ENCODE measurements at regions of chr6 and their contacts with region 1.

Region 1: GRCh38 chr6:108260809-108261569 is at the start of gene SNX3:
- DNase-seq: peak; percentile 98
- H3K4me3 ChIP-seq: peak within 1 kb of the TSS; percentile 87
- H3K4me3 Mint-ChIP-seq: peak within 1 kb of the TSS; percentile 92
- H3K27ac Mint-ChIP-seq: peak within 1 kb of the TSS; percentile 87
- H3K4me1 ChIP-seq: peaks cover 8% of the 10 kb centered on the region; the same call in 1 of the 2 replicates
- H3K4me1 Mint-ChIP-seq: no peaks in the 10 kb centered on the region
- H3K27me3 ChIP-seq: no peaks in the 10 kb centered on the region
- H3K27me3 Mint-ChIP-seq: no peaks in the 10 kb centered on the region
- CTCF ChIP-seq: no peak
- total RNA-seq, gene SNX3: 111 and 114 TPM in 2 replicates

Region 2: GRCh38 chr6:106751501-106752252 is 1509.3 kb before region 1 on chr6:
- CTCF ChIA-PET with region 1: no interaction called
- POLR2A ChIA-PET with region 1: no interaction called
- intact Hi-C with region 1: no loop called
- DNase-seq: peak in 1 of 2 experiments; percentile 55
- H3K4me3 ChIP-seq: no peak overlapping the region
- H3K4me3 Mint-ChIP-seq: no peak overlapping the region
- H3K27ac Mint-ChIP-seq: peak overlapping the region; percentile 4
- H3K4me1 ChIP-seq: peaks cover 26% of the 10 kb centered on the region
- H3K4me1 Mint-ChIP-seq: peaks cover 23% of the 10 kb centered on the region
- H3K27me3 ChIP-seq: no peaks in the 10 kb centered on the region
- H3K27me3 Mint-ChIP-seq: no peaks in the 10 kb centered on the region
- CTCF ChIP-seq: no peak

Region 3: GRCh38 chr6:107957909-107958688 is 302.9 kb before region 1 on chr6 and contains the start of gene SEC63:
- CTCF ChIA-PET with region 1: no interaction called
- POLR2A ChIA-PET with region 1: interaction called, 10 read pairs
- intact Hi-C with region 1: no loop called
- DNase-seq: peak; percentile 97
- H3K4me3 ChIP-seq: peak within 1 kb of the TSS; percentile 67
- H3K4me3 Mint-ChIP-seq: peak within 1 kb of the TSS; percentile 92
- H3K27ac Mint-ChIP-seq: peak within 1 kb of the TSS; percentile 93
- H3K4me1 ChIP-seq: 0 out of 2 replicates have a peak, but pooled peaks cover 4% of the 10 kb centered on the region
- H3K4me1 Mint-ChIP-seq: peaks cover 7% of the 10 kb centered on the region
- H3K27me3 ChIP-seq: no peaks in the 10 kb centered on the region
- H3K27me3 Mint-ChIP-seq: no peaks in the 10 kb centered on the region
- CTCF ChIP-seq: no peak
- total RNA-seq, gene SEC63: 119 and 124 TPM in 2 replicates

Region 4: GRCh38 chr6:108193120-108193519 is 67.9 kb before region 1 on chr6:
- CTCF ChIA-PET with region 1: interaction called, 10 read pairs
- POLR2A ChIA-PET with region 1: no interaction called
- intact Hi-C with region 1: no loop called
- DNase-seq: no peak
- H3K4me3 ChIP-seq: no peak overlapping the region
- H3K4me3 Mint-ChIP-seq: no peak overlapping the region
- H3K27ac Mint-ChIP-seq: no peak overlapping the region
- H3K4me1 ChIP-seq: no peaks in the 10 kb centered on the region
- H3K4me1 Mint-ChIP-seq: no peaks in the 10 kb centered on the region
- H3K27me3 ChIP-seq: no peaks in the 10 kb centered on the region
- H3K27me3 Mint-ChIP-seq: no peaks in the 10 kb centered on the region
- CTCF ChIP-seq: no peak

Region 5: DNA sequence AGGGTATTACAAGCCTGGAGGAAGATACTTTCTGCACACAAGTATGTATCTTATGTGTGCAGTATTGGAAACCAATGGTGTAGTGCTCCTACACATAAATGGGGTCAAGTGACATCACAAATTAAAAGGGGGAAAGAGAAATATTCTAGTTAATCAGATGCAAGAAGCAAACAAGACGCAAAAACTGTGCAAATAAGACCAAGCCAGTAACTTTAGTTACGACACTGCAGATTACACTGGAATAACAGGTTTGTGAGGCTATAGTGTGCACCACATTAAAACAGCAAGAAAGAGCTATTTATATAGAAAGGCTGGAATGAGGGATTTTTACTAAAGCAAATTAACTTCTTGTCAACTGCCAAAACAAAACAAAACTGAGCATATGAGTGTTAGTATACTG is 49.3 kb before region 1 on chr6:
- CTCF ChIA-PET with region 1: no interaction called
- POLR2A ChIA-PET with region 1: no interaction called
- intact Hi-C with region 1: no loop called
- DNase-seq: peak in 1 of 2 experiments; percentile 28
- H3K4me3 ChIP-seq: no peak overlapping the region
- H3K4me3 Mint-ChIP-seq: no peak overlapping the region
- H3K27ac Mint-ChIP-seq: no peak overlapping the region
- H3K4me1 ChIP-seq: peaks cover 4% of the 10 kb centered on the region
- H3K4me1 Mint-ChIP-seq: peaks cover 9% of the 10 kb centered on the region
- H3K27me3 ChIP-seq: no peaks in the 10 kb centered on the region
- H3K27me3 Mint-ChIP-seq: no peaks in the 10 kb centered on the region
- CTCF ChIP-seq: no peak

Region 6: GRCh38 chr6:108359901-108360882 is 99.2 kb after region 1 on chr6:
- CTCF ChIA-PET with region 1: no interaction called
- POLR2A ChIA-PET with region 1: no interaction called
- intact Hi-C with region 1: loop called (anchors 5 kb)
- DNase-seq: no peak
- H3K4me3 ChIP-seq: no peak overlapping the region
- H3K4me3 Mint-ChIP-seq: no peak overlapping the region
- H3K27ac Mint-ChIP-seq: no peak overlapping the region
- H3K4me1 ChIP-seq: no peaks in the 10 kb centered on the region; the same call in 1 of the 2 replicates
- H3K4me1 Mint-ChIP-seq: no peaks in the 10 kb centered on the region
- H3K27me3 ChIP-seq: no peaks in the 10 kb centered on the region
- H3K27me3 Mint-ChIP-seq: no peaks in the 10 kb centered on the region
- CTCF ChIP-seq: peak in 1 of 2 experiments; percentile 4

Region 7: GRCh38 chr6:109048176-109048575 is 787.2 kb after region 1 on chr6:
- CTCF ChIA-PET with region 1: no interaction called
- POLR2A ChIA-PET with region 1: interaction called, 14 read pairs
- intact Hi-C with region 1: no loop called
- DNase-seq: peak in 1 of 2 experiments; percentile 29
- H3K4me3 ChIP-seq: no peak overlapping the region
- H3K4me3 Mint-ChIP-seq: peak overlapping the region; percentile 22
- H3K27ac Mint-ChIP-seq: peak overlapping the region; percentile 23
- H3K4me1 ChIP-seq: peaks cover 46% of the 10 kb centered on the region
- H3K4me1 Mint-ChIP-seq: peaks cover 46% of the 10 kb centered on the region
- H3K27me3 ChIP-seq: no peaks in the 10 kb centered on the region
- H3K27me3 Mint-ChIP-seq: no peaks in the 10 kb centered on the region
- CTCF ChIP-seq: no peak